Heart left ventricle (tissue), 16 donors: ENCODE measurements at regions of chr7 and their contacts with region 1.

Region 1: DNA sequence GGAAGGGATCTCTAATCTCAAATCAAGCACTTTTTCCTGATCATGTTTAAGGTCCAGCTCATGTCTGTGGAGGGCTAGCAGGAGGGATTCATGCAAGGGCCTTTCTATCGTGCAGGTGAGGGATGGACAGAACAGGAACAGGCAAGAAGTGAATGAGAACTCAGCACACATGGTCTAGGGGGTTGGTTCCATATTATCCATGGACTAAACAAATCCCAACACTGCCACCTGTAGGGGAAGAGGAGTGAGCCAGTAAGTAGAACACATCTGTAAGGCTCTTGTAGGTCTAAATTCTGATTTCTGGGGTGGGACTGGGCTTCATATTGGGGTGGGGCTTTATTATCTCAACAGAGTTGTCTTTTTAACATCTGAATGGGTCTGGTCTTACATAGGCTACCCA is 138.0 kb upstream of the TARP start:
- DNase-seq: no peak
- ATAC-seq: no peak
- H3K4me3 ChIP-seq: no peak overlapping the region
- H3K27ac ChIP-seq: no peak overlapping the region
- H3K4me1 ChIP-seq: no peaks in the 10 kb centered on the region
- H3K27me3 ChIP-seq: no peaks in the 10 kb centered on the region
- CTCF ChIP-seq: peak in 1 of 12 donors; percentile 6
- POLR2A ChIP-seq: no peak

Region 2: DNA sequence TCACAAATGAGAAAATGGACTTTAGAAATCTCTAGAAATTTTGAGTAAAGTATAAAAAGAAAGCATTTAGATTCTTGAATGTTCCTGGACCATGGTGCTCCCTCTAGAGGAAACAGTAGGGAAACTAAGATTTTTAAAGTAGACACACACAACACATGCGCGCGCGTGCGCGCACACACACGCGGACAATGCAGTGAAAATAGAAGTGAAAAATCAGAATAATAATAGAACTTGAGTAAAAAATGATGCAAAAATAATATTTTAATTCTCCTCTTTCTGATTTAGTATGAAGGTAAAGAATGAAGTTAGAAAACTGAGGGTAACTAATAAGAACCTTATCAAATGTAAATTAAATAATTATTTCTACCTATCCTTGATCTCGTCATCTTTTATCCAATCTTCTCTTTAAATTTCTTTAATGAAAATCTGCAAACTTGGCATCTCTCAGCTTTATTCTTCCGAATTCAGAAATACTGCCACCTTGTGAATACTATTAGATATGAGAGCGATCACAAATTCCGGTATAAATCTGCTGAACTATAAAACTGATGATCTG is 336.7 kb after region 1 on chr7:
- intact Hi-C with region 1: loop called in 2 of 10 experiments (anchors 10 kb)
- DNase-seq: no peak
- ATAC-seq: peak in 1 of 4 donors; percentile 62
- H3K4me3 ChIP-seq: peak overlapping the region in 2 of 12 donors; percentile 21 to 24
- H3K27ac ChIP-seq: no peak overlapping the region
- H3K4me1 ChIP-seq: peaks cover 0 to 4% (median 0%) of the 10 kb centered on the region in 12 donors
- H3K27me3 ChIP-seq: no peaks in the 10 kb centered on the region
- CTCF ChIP-seq: peak in 11 of 12 donors; percentile 10 to 59 (median 31)
- POLR2A ChIP-seq: no peak

Region 3: GRCh38 chr7:39510864-39511354 is 1099.5 kb after region 1 on chr7:
- intact Hi-C with region 1: loop called in 1 of 10 experiments (anchors 10 kb)
- DNase-seq: no peak
- ATAC-seq: no peak
- H3K4me3 ChIP-seq: no peak overlapping the region
- H3K27ac ChIP-seq: no peak overlapping the region
- H3K4me1 ChIP-seq: no peaks in the 10 kb centered on the region
- H3K27me3 ChIP-seq: no peaks in the 10 kb centered on the region
- CTCF ChIP-seq: no peak
- POLR2A ChIP-seq: no peak